ENCODE measurements at regions of chr1 and their contacts with region 1.

Region 1: DNA sequence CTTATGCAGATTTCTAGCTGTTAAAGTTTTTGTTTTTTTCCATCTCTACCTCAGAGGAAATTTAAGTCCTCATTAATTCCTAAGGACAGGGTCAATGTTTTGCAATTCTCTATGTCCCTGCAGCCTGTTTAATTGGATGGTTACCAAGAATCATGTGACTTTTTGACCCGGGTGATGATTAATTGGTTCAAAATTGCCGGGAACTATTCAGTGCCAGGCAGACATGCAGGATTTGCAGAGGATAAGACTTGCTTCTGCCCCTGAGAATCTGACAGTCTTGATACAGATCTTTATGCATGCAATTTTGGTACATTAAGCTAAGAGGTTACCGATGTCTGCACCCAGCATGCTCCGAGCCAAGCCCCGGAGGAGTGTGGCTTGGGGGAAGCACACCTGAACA is 87.9 kb downstream of the PLPP3 start:
- DNase-seq: no peak
- H3K4me3 ChIP-seq: no peak overlapping the region
- H3K4me3 Mint-ChIP-seq: no peak overlapping the region
- H3K27ac Mint-ChIP-seq: peak overlapping the region; percentile 48
- H3K4me1 ChIP-seq: peaks cover 36% of the 10 kb centered on the region
- H3K4me1 Mint-ChIP-seq: peaks cover 43% of the 10 kb centered on the region
- H3K27me3 ChIP-seq: no peaks in the 10 kb centered on the region
- H3K27me3 Mint-ChIP-seq: no peaks in the 10 kb centered on the region
- CTCF ChIP-seq: no peak

Region 2: GRCh38 chr1:56235909-56236510 is 255.4 kb before region 1 on chr1:
- CTCF ChIA-PET with region 1: no interaction called
- POLR2A ChIA-PET with region 1: no interaction called
- intact Hi-C with region 1: loop called (anchors 1 kb)
- DNase-seq: peak; percentile 53 to 54
- H3K4me3 ChIP-seq: no peak overlapping the region
- H3K4me3 Mint-ChIP-seq: no peak overlapping the region
- H3K27ac Mint-ChIP-seq: no peak overlapping the region
- H3K4me1 ChIP-seq: peaks cover 11% of the 10 kb centered on the region
- H3K4me1 Mint-ChIP-seq: peaks cover 17% of the 10 kb centered on the region
- H3K27me3 ChIP-seq: no peaks in the 10 kb centered on the region
- H3K27me3 Mint-ChIP-seq: no peaks in the 10 kb centered on the region
- CTCF ChIP-seq: no peak

Region 3: DNA sequence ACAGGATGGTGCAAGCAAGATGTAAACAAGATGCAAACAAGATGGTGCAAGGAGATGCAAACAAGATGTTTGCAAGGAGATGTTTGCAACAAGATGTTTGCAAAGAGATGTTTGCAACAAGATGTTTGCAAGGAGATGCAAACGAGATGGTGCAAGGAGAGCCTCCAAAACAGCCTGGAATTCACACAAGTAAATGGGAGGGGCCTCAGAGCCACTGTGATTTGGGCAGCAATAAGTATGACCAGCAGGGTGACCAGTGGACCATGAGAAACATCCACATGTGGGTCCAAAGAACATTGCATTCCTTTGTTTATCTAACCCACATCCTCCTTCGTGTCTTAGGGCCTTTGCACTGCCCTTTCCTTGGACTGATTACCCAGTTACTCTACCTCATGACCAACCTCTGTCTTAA is 75.0 kb before region 1 on chr1:
- CTCF ChIA-PET with region 1: no interaction called
- POLR2A ChIA-PET with region 1: no interaction called
- intact Hi-C with region 1: loop called (anchors 5 kb)
- DNase-seq: peak; percentile 25 to 63
- H3K4me3 ChIP-seq: no peak overlapping the region
- H3K4me3 Mint-ChIP-seq: no peak overlapping the region
- H3K27ac Mint-ChIP-seq: no peak overlapping the region
- H3K4me1 ChIP-seq: peaks cover 44% of the 10 kb centered on the region
- H3K4me1 Mint-ChIP-seq: peaks cover 37% of the 10 kb centered on the region
- H3K27me3 ChIP-seq: no peaks in the 10 kb centered on the region
- H3K27me3 Mint-ChIP-seq: no peaks in the 10 kb centered on the region
- CTCF ChIP-seq: peak in 1 of 2 experiments; percentile 13

Region 4: DNA sequence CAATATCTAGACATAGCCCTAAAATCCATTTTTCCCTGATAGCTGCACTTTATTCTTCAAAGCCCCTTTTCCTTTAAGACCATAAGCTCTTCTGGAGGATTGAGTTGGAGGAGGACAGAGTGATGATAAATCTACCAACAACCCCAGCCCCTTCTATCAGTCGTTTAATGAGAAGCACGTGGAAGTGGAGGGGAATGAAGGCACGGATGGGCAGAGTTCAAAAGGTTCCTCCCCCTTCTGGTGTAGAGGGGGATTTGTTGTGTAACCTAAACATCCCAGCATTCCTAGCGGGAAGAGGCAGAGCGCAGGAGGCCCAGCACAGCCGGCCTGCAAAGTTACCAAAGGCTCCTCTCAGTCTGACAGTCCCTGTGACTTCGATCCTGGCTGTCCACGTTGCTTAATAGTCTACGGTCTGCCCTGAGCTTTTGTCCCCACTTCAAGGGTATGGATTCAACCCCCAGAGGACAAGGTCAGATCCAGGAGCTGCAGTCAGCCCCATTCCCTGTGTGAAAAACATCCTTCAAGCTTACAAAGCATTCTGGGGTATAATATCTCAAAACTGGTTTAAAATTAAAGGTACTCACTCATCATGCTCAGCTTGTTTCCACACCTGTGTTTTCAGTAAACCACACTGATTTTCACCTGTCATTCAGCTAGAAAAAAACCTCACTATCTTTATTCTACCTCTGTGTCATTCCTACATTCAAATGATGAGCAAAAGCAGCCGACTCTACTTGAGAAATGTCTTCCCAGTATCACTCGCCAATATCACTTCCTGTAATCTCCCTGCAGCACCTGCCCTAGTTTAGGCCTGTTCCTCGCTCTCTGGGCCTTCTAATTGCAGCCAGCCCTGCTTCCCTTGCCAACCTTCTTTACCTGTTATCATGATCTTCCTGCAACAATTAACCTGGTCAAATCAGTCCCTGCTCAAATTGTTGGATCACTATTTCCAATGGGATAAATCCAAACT is 30.0 kb before region 1 on chr1:
- CTCF ChIA-PET with region 1: no interaction called
- POLR2A ChIA-PET with region 1: no interaction called
- intact Hi-C with region 1: no loop called
- DNase-seq: no peak
- H3K4me3 ChIP-seq: no peak overlapping the region
- H3K4me3 Mint-ChIP-seq: no peak overlapping the region
- H3K27ac Mint-ChIP-seq: no peak overlapping the region
- H3K4me1 ChIP-seq: peaks cover 8% of the 10 kb centered on the region
- H3K4me1 Mint-ChIP-seq: peaks cover 9% of the 10 kb centered on the region
- H3K27me3 ChIP-seq: no peaks in the 10 kb centered on the region
- H3K27me3 Mint-ChIP-seq: no peaks in the 10 kb centered on the region
- CTCF ChIP-seq: no peak

Region 5: GRCh38 chr1:56508523-56508983 is 17.1 kb after region 1 on chr1:
- CTCF ChIA-PET with region 1: no interaction called
- POLR2A ChIA-PET with region 1: no interaction called
- intact Hi-C with region 1: loop called (anchors 1 kb)
- DNase-seq: peak; percentile 76 to 89
- H3K4me3 ChIP-seq: no peak overlapping the region
- H3K4me3 Mint-ChIP-seq: no peak overlapping the region
- H3K27ac Mint-ChIP-seq: peak overlapping the region; percentile 84
- H3K4me1 ChIP-seq: peaks cover 53% of the 10 kb centered on the region
- H3K4me1 Mint-ChIP-seq: peaks cover 65% of the 10 kb centered on the region
- H3K27me3 ChIP-seq: no peaks in the 10 kb centered on the region
- H3K27me3 Mint-ChIP-seq: no peaks in the 10 kb centered on the region
- CTCF ChIP-seq: no peak

Region 6: DNA sequence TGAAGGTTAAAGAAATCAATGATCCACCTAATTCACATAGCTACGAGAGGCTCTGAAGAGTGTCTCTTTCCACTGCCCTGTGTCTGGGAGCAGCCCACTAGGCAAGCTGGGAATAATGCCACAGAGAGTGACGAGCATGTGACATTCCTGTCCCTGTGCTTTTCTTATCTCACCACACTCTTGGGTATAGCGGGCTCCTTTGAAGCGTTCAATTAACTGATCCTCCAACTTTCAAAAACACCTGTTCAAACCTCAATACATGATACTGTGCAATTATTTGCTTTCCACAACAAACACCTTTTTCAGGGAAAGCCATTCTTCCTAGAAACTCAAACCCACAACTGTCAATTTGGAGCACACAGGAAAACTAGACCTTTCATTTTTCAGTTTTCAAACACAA is 44.5 kb after region 1 on chr1:
- CTCF ChIA-PET with region 1: no interaction called
- POLR2A ChIA-PET with region 1: no interaction called
- intact Hi-C with region 1: loop called (anchors 1 kb)
- DNase-seq: peak; percentile 57 to 58
- H3K4me3 ChIP-seq: no peak overlapping the region
- H3K4me3 Mint-ChIP-seq: peak overlapping the region; percentile 24
- H3K27ac Mint-ChIP-seq: no peak overlapping the region
- H3K4me1 ChIP-seq: peaks cover 31% of the 10 kb centered on the region
- H3K4me1 Mint-ChIP-seq: peaks cover 15% of the 10 kb centered on the region
- H3K27me3 ChIP-seq: no peaks in the 10 kb centered on the region
- H3K27me3 Mint-ChIP-seq: no peaks in the 10 kb centered on the region
- CTCF ChIP-seq: no peak